ENCODE measurements at regions of chr3 and their contacts with region 1.

Region 1: DNA sequence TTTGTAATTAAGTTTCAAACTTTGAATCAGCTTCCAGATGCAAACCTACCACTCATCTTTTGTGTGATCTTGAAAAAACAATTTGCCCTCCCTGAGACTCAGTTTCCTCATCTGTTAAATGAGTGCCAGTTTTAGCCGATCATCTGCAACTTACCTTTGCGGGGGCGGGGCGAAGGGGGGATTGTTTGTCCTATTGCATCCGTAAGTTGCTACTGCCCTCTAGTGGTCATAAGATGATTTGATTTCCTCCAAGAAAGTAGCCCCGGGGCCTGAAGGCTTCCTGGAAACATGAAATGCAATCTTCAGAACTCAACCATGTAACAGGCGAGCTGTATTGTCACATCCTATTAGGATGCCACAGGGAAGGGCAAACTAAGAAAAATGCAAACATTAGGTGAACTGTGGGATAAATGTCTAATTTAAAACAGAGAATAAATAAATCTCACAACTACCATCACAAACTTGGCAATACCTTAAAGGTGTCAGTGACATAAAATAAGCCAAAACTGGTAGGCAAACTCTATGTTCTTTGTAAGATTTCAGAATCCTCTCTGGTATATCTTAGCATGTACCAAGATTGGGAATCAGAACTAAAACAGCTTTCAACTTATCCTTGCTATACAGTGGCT is 63.5 kb upstream of the CLDN18 start:
- DNase-seq: peak; percentile 71
- ATAC-seq: peak; percentile 93
- H3K4me3 ChIP-seq: no peak overlapping the region
- H3K27ac ChIP-seq: no peak overlapping the region
- H3K4me1 ChIP-seq: no peaks in the 10 kb centered on the region
- H3K27me3 ChIP-seq: no peaks in the 10 kb centered on the region
- CTCF ChIP-seq: peak; percentile 59 to 84 (median 64); a peak in 5 of 6 replicates
- POLR2A ChIP-seq: no peak
- RAD21 ChIP-seq: peak; percentile 91

Region 2: GRCh38 chr3:137032465-137033120 is 913.9 kb before region 1 on chr3:
- CTCF ChIA-PET with region 1: no interaction called
- POLR2A ChIA-PET with region 1: no interaction called
- RAD21 ChIA-PET with region 1: no interaction called
- intact Hi-C with region 1: loop called (anchors 2 kb)
- DNase-seq: peak; percentile 68
- ATAC-seq: peak; percentile 90
- H3K4me3 ChIP-seq: peak overlapping the region; percentile 19 to 36; a peak in 3 of 4 replicates
- H3K27ac ChIP-seq: no peak overlapping the region
- H3K4me1 ChIP-seq: peaks cover 0 to 11% of the 10 kb centered on the region in 2 experiments; a peak in 2 of 4 replicates
- H3K27me3 ChIP-seq: no peaks in the 10 kb centered on the region
- CTCF ChIP-seq: peak; percentile 66 to 95 (median 87)
- POLR2A ChIP-seq: no peak
- RAD21 ChIP-seq: peak; percentile 84

Region 3: GRCh38 chr3:137105277-137105977 is 841.0 kb before region 1 on chr3:
- CTCF ChIA-PET with region 1: interaction called, 6 read pairs
- POLR2A ChIA-PET with region 1: no interaction called
- RAD21 ChIA-PET with region 1: interaction called in 1 of 2 experiments, 5 read pairs
- intact Hi-C with region 1: loop called (anchors 5 kb)
- DNase-seq: peak; percentile 52
- ATAC-seq: peak; percentile 82
- H3K4me3 ChIP-seq: no peak overlapping the region
- H3K27ac ChIP-seq: no peak overlapping the region
- H3K4me1 ChIP-seq: no peaks in the 10 kb centered on the region
- H3K27me3 ChIP-seq: peaks cover 37% of the 10 kb centered on the region
- CTCF ChIP-seq: peak; percentile 52 to 85 (median 70); a peak in 5 of 6 replicates
- POLR2A ChIP-seq: no peak
- RAD21 ChIP-seq: peak; percentile 81

Region 4: DNA sequence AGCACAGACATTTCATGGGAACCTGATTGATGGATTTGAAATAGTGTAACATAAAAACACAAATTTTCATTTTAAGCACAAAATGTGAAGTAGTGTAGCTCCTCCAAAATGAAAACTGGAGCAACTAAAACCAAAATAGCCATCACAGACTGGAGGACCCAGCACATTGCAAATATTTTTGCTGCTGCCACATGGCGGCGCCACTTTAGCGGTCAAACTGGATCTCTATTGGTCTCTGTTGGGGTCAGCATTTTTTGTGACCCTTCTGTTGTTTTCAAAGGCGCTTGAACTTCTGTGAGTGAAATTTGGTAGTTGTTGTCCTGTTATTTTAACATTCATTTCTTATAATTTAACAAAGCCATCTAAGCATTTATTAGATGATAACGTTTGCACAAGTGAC is 728.7 kb before region 1 on chr3:
- CTCF ChIA-PET with region 1: no interaction called
- POLR2A ChIA-PET with region 1: no interaction called
- RAD21 ChIA-PET with region 1: no interaction called
- intact Hi-C with region 1: loop called (anchors 1 kb)
- DNase-seq: no peak
- ATAC-seq: peak; percentile 75
- H3K4me3 ChIP-seq: no peak overlapping the region
- H3K27ac ChIP-seq: no peak overlapping the region
- H3K4me1 ChIP-seq: no peaks in the 10 kb centered on the region
- H3K27me3 ChIP-seq: no peaks in the 10 kb centered on the region; the same call in 1 of the 2 replicates
- CTCF ChIP-seq: peak; percentile 29 to 79 (median 67); a peak in 5 of 6 replicates
- POLR2A ChIP-seq: no peak
- RAD21 ChIP-seq: peak; percentile 50

Region 5: GRCh38 chr3:137409584-137409983 is 536.9 kb before region 1 on chr3:
- CTCF ChIA-PET with region 1: no interaction called
- POLR2A ChIA-PET with region 1: no interaction called
- RAD21 ChIA-PET with region 1: no interaction called
- intact Hi-C with region 1: loop called (anchors 5 kb)
- DNase-seq: no peak
- ATAC-seq: peak; percentile 47; the same call in 1 of the 2 replicates
- H3K4me3 ChIP-seq: no peak overlapping the region
- H3K27ac ChIP-seq: no peak overlapping the region
- H3K4me1 ChIP-seq: no peaks in the 10 kb centered on the region
- H3K27me3 ChIP-seq: no peaks in the 10 kb centered on the region
- CTCF ChIP-seq: peak; percentile 23 to 44 (median 39); a peak in 4 of 6 replicates
- POLR2A ChIP-seq: no peak
- RAD21 ChIP-seq: peak; percentile 16; the same call in 1 of the 2 replicates

Region 6: DNA sequence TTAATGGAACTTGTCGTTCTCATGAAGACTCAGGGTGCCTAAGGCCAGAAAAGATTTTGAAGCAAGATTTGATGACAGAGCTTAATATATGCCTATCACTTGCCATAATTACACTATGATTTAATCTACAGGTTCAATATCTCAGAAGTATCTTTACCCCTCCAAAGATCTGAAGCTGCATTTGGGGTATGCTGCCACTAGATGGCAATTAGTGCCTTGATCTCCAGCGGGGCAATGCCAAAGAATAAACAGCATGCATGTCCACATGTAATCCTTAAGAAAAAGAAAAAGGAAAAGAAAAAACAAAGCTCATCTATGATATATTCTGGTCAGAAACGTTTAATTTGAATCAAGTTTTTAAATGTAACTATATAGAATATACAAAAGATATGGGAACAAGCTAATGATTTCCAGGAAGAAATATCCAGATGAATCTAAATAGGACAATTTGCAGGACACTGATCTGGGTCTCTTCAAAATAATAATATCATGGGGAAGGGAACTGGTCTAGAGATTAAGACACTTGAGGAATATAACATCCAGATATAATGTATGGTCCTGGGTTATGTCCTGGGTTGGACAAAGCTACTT is 237.4 kb before region 1 on chr3:
- CTCF ChIA-PET with region 1: interaction called, 3 read pairs
- POLR2A ChIA-PET with region 1: no interaction called
- RAD21 ChIA-PET with region 1: no interaction called
- intact Hi-C with region 1: loop called (anchors 1 kb)
- DNase-seq: peak; percentile 10
- ATAC-seq: peak; percentile 49; the same call in 1 of the 2 replicates
- H3K4me3 ChIP-seq: no peak overlapping the region
- H3K27ac ChIP-seq: no peak overlapping the region
- H3K4me1 ChIP-seq: no peaks in the 10 kb centered on the region
- H3K27me3 ChIP-seq: no peaks in the 10 kb centered on the region
- CTCF ChIP-seq: peak; percentile 53 to 71 (median 70); a peak in 5 of 6 replicates
- POLR2A ChIP-seq: no peak
- RAD21 ChIP-seq: peak; percentile 60

Region 7: DNA sequence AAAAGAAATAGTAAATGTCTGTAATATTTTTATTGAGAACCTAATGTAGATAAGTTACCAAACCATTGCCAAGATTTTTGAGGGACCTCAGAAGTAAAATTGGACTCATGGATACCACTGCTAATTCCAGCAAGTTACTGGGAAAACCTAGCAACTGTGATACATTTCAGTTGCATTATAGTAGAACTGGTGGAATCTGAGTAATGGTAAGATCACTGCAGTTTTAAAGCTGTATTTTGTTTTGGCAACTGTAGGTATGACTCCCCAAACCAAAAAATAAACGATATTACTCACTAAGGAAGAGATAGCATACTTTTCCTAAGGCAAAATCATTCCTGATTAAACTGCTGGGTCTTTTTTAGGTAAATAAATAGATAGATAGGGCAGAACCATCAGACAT is 294.6 kb after region 1 on chr3:
- CTCF ChIA-PET with region 1: no interaction called
- POLR2A ChIA-PET with region 1: no interaction called
- RAD21 ChIA-PET with region 1: no interaction called
- intact Hi-C with region 1: no loop called
- DNase-seq: no peak
- ATAC-seq: no peak
- H3K4me3 ChIP-seq: no peak overlapping the region
- H3K27ac ChIP-seq: no peak overlapping the region
- H3K4me1 ChIP-seq: no peaks in the 10 kb centered on the region
- H3K27me3 ChIP-seq: no peaks in the 10 kb centered on the region
- CTCF ChIP-seq: no peak
- POLR2A ChIP-seq: no peak
- RAD21 ChIP-seq: no peak

Region 8: GRCh38 chr3:138434276-138434874 is 487.9 kb after region 1 on chr3 and contains the start of gene ESYT3:
- CTCF ChIA-PET with region 1: no interaction called
- POLR2A ChIA-PET with region 1: no interaction called
- RAD21 ChIA-PET with region 1: no interaction called
- intact Hi-C with region 1: no loop called
- DNase-seq: no peak
- ATAC-seq: no peak
- H3K4me3 ChIP-seq: no peak within 1 kb of the TSS
- H3K27ac ChIP-seq: no peak within 1 kb of the TSS
- H3K4me1 ChIP-seq: no peaks in the 10 kb centered on the region
- H3K27me3 ChIP-seq: no peaks in the 10 kb centered on the region
- CTCF ChIP-seq: no peak
- POLR2A ChIP-seq: no peak
- RAD21 ChIP-seq: no peak
- total RNA-seq, gene ESYT3: 0.05 TPM

Measured in HCT116 (cell line).